ENCODE measurements at regions of chr17 and their contacts with region 1.

Region 1: DNA sequence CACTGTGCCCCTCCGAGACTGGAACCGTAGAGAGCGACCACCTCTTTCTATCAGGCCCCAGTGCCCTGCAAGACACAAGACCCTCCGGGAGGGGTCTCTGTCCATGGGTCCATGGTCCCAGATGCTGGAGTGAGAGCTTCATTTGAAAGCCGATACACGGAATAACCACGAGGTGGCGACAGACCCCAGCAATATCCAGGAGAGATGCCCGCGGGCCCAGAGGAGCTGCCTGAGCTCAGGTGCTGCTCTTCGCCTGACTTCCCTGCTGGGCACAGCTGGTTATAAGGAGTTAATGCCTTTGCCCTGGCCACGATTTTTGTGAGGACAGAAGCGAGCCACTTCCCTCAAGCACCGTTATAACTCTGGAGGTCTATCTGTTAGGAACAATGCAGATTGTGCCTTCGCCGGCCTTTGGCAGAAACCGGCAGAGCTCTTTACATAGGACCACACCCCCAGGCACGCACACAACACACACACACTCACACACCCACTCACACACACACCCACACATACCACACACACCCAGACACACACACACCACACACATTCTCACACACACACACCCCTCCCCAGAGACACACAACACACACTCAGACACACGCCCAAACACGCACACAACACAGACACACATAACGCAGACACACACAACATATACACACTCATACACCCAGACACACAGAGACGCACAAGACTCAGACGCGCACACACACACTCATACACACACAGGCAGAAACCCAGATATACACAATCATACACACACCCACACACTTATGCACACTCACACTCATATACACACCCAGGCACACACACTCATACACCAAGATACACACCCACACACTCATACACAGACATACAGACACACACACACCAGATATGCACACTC is 436.4 kb downstream of the SOX9 start:
- DNase-seq: peak; percentile 83 to 93
- ATAC-seq: peak; percentile 51 to 62
- H3K4me3 ChIP-seq: no peak overlapping the region
- H3K27ac ChIP-seq: peak overlapping the region in 1 of 2 experiments; percentile 61; a peak in 3 of 6 replicates
- H3K4me1 ChIP-seq: peaks cover 45% of the 10 kb centered on the region
- CTCF ChIP-seq: peak; percentile 97
- EP300 ChIP-seq: no peak
- POLR2A ChIP-seq: no peak
- RAD21 ChIP-seq: peak; percentile 94

Region 2: DNA sequence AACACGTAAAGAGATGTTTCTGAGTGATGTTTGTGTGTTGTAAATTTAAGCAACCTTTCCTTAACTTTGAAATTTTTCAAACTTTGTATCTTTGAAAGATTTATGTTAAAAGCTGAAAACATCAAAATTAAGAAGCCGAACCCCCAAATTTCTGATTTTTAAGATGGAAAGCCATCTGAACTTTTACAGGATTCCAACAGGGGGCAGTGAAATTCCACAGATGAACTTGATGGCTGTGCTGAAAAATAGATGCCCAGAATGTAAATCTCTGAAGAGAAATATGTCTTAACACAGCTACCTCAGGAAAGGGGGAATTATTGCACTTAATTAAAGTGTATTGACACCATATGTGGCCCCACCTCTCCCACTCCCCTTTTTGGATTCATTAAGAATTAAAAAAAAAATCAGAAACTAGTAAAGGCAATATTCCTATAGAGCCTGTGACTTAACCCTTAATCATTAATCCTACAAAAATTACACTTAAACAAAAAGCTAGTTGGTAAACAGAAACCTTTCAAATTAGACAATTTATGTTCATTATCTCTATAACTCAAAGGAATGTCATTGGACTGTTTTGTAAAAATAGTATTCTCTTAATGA is 1790.0 kb before region 1 on chr17:
- CTCF ChIA-PET with region 1: interaction called, 15 read pairs
- POLR2A ChIA-PET with region 1: no interaction called
- DNase-seq: peak; percentile 29 to 43
- ATAC-seq: peak in 1 of 2 experiments; percentile 39; a peak in 1 of 6 replicates
- H3K4me3 ChIP-seq: no peak overlapping the region
- H3K27ac ChIP-seq: no peak overlapping the region
- H3K4me1 ChIP-seq: no peaks in the 10 kb centered on the region
- CTCF ChIP-seq: peak; percentile 89
- EP300 ChIP-seq: no peak
- POLR2A ChIP-seq: no peak
- RAD21 ChIP-seq: peak; percentile 86 to 93

Region 3: DNA sequence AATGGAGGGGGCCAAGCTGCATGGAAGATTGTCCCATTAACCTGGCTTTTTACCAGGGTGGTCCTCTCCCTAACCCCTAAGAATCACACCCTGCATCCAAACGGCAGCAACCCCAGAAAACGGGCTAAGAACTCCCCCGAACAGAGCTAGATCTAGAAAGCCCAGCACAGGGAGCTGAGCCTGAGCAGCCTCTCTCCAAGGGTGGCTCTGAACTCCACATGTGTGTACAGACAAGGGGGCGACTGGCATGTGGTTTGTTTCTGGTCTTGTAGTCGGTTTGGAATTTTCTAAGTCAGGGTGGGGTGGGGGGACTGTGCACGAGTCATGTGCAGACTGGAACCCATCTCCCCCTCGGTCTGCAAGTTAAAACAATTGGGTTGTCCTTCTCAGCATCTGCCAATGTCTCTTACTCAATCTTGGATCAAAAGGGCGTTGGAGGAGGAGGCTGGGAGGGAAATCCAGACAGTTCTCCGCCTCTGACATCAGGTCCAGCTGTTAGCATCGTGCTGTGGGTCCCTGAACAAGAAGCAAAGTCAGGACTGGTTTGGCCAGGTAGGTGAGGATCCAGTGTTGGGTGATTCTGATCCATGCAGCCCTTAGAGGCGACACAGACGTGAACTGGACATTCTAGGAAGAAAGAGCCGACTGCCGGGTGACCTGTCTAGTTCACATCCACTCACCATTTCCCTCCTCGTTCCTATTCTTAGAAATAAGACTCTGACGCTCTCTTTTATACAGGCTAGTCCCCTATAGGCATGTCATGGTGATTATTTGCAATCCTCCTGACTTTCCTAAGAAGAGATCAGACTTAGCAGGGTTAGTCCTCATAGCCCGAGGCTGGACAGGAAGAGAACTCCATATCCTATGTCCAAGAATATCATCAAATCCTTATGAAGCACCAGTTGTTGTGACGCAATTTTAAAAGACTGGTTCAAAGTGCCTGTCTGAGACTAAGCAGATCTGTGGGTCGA is 54.5 kb before region 1 on chr17:
- CTCF ChIA-PET with region 1: no interaction called
- POLR2A ChIA-PET with region 1: no interaction called
- DNase-seq: peak in 1 of 2 experiments; percentile 62
- ATAC-seq: peak; percentile 51 to 67
- H3K4me3 ChIP-seq: no peak overlapping the region
- H3K27ac ChIP-seq: peak overlapping the region; percentile 63 to 81
- H3K4me1 ChIP-seq: peaks cover 50% of the 10 kb centered on the region
- CTCF ChIP-seq: no peak
- EP300 ChIP-seq: no peak
- POLR2A ChIP-seq: no peak
- RAD21 ChIP-seq: no peak

Region 4: DNA sequence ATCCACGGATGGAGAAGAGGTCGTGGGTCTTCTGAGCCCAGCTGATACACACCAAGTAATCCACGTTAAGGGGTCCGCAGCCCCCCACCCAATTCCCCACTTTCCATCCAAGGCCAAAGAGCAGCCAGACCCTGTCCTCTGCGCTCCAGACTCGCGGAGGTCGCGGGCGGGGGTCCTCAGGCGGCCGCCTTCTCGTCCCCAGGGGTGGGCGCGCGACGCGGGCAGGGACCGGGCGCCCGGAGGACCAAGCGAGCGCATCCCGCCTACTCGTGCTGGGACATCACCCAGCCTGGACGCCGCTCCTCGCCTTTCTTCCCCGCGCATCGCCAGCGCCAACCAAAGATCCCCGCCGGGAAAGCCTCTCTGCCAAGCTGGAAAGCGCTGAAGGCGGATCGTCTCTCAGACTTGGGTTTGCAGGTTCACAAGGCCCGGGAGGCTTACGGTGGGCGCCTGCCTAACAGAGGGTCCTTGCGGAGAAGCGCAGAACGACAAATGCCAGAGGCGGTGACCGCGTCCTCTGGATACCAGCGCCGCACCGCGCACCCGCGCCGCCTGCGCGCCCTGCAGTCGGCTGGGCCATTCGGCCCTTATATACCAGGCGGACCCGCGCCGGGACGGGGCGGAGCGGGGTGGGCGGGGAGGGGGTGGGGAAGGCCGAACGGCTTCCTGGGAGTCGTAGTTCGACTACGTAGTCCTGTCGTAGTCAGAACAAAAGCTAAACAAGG is 35.2 kb after region 1 on chr17:
- CTCF ChIA-PET with region 1: interaction called, 334 read pairs
- POLR2A ChIA-PET with region 1: interaction called, 25 read pairs
- DNase-seq: peak; percentile 90 to 97
- ATAC-seq: peak; percentile 72 to 86
- H3K4me3 ChIP-seq: peak overlapping the region; percentile 78
- H3K27ac ChIP-seq: peak overlapping the region; percentile 80 to 91
- H3K4me1 ChIP-seq: peaks cover 28% of the 10 kb centered on the region
- CTCF ChIP-seq: no peak
- EP300 ChIP-seq: no peak
- POLR2A ChIP-seq: peak; percentile 100
- RAD21 ChIP-seq: peak; percentile 28 to 67; a peak in 4 of 5 replicates

Region 5: DNA sequence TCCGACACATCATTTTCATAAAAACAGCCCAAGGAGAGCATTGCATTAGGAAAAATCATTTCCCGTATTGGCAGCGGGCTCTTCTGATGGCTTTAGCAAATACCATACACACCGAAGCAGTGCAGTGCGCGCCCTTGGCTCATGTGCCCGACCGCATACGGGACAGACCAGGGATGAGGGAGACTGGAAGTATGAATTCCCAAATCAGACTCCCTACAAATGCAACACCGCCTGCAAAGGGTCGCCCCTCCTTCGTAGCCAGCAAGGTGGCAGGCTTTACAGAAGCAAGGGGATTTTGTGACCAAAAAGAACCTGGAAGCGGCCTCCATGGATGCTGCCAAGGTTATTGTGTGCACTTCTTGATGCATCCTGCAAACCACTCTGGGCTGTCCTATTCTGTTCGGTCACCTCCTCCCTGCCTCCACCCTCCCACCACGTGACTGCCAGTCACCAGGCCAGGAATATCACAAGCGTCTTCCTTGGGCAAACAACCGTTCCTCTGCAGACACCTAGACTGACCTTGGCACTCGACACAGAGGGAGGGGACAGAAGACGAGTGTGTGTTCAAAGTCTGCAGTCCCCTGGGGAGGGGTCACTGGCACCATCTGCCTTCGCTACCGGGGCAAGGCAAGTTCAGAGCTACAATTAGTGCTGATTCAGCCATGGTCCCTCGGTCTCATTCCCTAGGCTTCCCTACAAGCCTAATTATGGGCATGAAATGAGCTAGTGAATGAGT is 74.9 kb after region 1 on chr17:
- CTCF ChIA-PET with region 1: interaction called, 18 read pairs
- POLR2A ChIA-PET with region 1: no interaction called
- DNase-seq: peak; percentile 85
- ATAC-seq: peak; percentile 85 to 91
- H3K4me3 ChIP-seq: no peak overlapping the region
- H3K27ac ChIP-seq: peak overlapping the region; percentile 63 to 78
- H3K4me1 ChIP-seq: peaks cover 32% of the 10 kb centered on the region
- CTCF ChIP-seq: no peak
- EP300 ChIP-seq: no peak
- POLR2A ChIP-seq: no peak
- RAD21 ChIP-seq: peak in 1 of 2 experiments; percentile 30; a peak in 2 of 5 replicates

Region 6: DNA sequence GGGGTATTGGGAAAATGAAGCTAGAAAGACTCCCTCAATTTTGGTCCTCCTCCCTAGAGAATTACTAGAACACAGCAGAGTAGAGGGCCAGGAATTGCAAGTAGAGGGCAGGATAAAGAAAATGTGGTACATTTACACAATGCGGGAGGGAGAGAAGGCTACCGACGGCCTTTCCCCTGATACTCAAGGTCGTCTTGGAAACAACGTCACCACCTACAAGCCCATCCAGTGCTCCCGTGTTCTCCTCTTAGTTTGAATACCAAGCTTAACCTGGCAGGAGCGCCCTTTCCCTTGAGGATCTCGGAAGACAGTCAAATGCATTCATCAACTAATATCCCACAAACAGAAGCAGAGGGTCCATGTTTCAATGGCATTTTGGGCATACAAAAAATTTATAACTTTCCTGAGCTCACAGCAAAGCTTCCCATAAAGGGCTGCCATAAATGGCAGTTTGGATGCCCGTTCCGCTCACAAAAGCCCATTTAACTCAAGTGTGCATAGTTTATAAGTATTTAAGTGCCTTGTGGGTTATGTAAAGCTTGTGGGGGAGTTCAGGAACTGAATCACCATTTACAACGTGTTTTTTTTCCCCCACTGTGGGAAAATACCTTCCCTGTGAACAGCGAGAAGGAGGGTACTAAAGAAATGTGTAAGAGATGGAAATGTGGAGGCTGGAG is 120.7 kb after region 1 on chr17:
- CTCF ChIA-PET with region 1: interaction called, 41 read pairs
- POLR2A ChIA-PET with region 1: no interaction called
- DNase-seq: no peak
- ATAC-seq: no peak
- H3K4me3 ChIP-seq: no peak overlapping the region
- H3K27ac ChIP-seq: peak overlapping the region in 1 of 2 experiments; percentile 42; a peak in 2 of 6 replicates
- H3K4me1 ChIP-seq: peaks cover 21% of the 10 kb centered on the region
- CTCF ChIP-seq: no peak
- EP300 ChIP-seq: no peak
- POLR2A ChIP-seq: no peak
- RAD21 ChIP-seq: no peak

Region 7: GRCh38 chr17:73156166-73156840 is 599.1 kb after region 1 on chr17:
- CTCF ChIA-PET with region 1: interaction called, 33 read pairs
- POLR2A ChIA-PET with region 1: no interaction called
- DNase-seq: peak; percentile 66 to 88
- ATAC-seq: peak; percentile 97 to 98
- H3K4me3 ChIP-seq: no peak overlapping the region
- H3K27ac ChIP-seq: peak overlapping the region in 1 of 2 experiments; percentile 50; a peak in 2 of 6 replicates
- H3K4me1 ChIP-seq: peaks cover 15% of the 10 kb centered on the region
- CTCF ChIP-seq: peak; percentile 67
- EP300 ChIP-seq: no peak
- POLR2A ChIP-seq: no peak
- RAD21 ChIP-seq: peak; percentile 81 to 84